ENCODE measurements at regions of chr1 and their contacts with region 1.

Region 1: GRCh38 chr1:178869119-178869697 is 1.7 kb downstream of the ANGPTL1 start:
- DNase-seq: no peak
- H3K4me3 ChIP-seq: peak overlapping the region; percentile 27 to 36
- H3K27ac ChIP-seq: peak overlapping the region; percentile 63
- H3K4me1 ChIP-seq: peaks cover 11% of the 10 kb centered on the region
- H3K27me3 ChIP-seq: no peaks in the 10 kb centered on the region
- CTCF ChIP-seq: no peak
- POLR2A ChIP-seq: no peak

Region 2: DNA sequence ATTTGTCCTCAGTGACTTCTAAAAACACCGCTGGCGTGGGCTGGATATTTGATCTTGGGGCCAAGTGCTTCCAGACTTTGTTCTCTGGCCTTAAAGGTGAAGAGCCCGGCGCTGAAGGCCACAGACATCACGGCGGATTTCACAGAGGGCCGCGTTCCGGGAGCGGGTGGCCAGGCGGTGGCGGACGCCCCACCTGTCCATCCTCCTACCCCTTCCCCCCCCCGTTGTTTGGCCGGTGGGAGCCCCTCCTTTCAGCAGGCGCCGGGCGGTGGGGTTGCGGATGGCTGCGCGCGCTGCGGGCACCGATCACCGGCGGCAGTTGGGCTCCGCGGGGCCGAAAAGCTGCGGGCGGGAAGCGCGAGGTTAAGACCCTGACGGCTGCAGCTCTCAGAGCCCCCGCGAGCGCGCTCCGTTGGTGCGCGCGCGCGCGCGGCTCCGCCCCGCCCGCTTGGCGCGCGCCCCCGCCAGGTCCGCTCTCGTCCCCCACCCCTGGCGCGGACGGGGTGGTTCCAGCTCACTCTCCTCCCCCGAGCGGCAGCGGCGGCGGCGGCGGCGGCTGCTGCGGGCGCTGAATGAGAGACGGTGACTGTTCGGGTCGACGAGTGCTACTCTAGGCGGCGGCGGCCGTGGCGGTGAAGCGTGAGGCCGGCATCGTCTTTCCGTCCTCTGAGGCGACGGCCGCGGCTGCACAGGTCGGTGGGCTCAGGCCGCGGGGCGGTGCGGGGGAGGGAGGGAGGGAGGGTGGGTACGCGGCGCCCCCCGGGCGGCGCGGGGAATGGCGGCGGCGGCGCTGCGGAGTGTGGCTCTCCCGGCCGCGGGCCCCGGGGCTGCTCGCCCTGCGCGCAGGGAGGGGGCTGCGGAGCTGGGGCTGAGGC is 144.2 kb before region 1 on chr1 and contains the start of gene RALGPS2:
- intact Hi-C with region 1: no loop called
- DNase-seq: no peak
- H3K4me3 ChIP-seq: peak within 1 kb of the TSS; percentile 85 to 95
- H3K27ac ChIP-seq: peak within 1 kb of the TSS; percentile 94
- H3K4me1 ChIP-seq: peaks cover 14% of the 10 kb centered on the region
- H3K27me3 ChIP-seq: no peaks in the 10 kb centered on the region
- CTCF ChIP-seq: peak in 1 of 3 experiments; percentile 23
- POLR2A ChIP-seq: peak in 1 of 2 donors; percentile 34
- total RNA-seq, gene RALGPS2: 20.4 TPM

Region 3: DNA sequence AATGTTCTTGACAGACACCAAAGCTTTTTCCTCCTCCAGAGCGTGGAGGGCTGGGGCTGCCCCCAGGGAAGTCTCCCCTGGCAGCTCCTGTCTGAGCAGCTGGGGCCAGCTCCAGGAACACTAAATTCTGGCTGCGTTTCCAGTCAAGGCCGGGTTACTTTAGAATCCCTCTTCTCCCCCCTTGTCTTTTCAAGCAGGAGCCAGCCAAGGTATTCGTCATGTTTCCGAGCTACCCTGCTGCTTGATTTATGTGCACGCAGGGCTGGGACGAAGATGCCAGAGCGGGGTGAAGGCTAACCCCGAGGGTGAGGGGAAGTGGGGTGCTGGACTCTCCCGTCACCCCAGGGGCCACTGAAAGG is 69.7 kb after region 1 on chr1:
- intact Hi-C with region 1: loop called (anchors 5 kb)
- DNase-seq: no peak
- H3K4me3 ChIP-seq: peak overlapping the region in 1 of 2 donors; percentile 23
- H3K27ac ChIP-seq: peak overlapping the region; percentile 83
- H3K4me1 ChIP-seq: peaks cover 39% of the 10 kb centered on the region
- H3K27me3 ChIP-seq: no peaks in the 10 kb centered on the region
- CTCF ChIP-seq: no peak
- POLR2A ChIP-seq: no peak